G401 (cell line): ENCODE measurements at regions of chr9 and their contacts with region 1.

Region 1: DNA sequence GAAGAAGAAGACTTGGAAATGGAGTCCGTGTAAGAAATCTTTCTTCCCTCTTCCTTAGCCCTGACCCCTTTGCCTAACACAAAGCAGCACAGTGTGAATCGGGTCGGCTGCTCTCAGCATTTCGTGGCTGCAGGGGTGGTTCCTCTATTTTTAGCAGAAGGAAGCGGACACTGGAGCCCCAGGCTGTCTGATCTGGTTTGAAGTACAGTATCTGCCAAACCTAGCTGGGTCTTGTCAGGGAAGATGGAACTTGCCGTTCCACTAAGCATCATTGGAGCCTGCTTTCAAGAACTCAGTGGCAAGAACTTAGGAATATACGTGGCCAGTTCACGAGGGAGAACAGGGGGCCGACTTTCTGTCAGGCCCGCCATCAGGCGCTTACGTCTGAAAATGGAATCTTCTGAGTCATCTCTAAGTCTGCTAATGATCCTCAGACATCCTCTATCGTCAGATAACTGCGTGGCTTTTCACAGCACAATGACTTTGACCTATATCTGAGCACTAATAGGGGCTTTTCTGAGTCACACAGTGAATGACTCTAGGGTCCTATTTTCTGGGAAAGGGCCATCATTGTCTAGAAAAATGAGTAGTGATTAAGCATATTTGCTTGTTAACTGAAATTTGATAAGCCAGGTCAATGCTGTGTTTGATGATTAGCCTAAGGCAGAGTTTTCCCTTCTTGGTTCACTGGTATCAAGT is 43.3 kb upstream of the NCS1 start:
- DNase-seq: peak; percentile 86

Region 2: GRCh38 chr9:130023144-130023787 is 105.6 kb before region 1 on chr9:
- in situ Hi-C with region 1: no loop called
- DNase-seq: no peak

Region 3: GRCh38 chr9:130186839-130187522 is 58.1 kb after region 1 on chr9:
- in situ Hi-C with region 1: no loop called
- DNase-seq: peak; percentile 89

Region 4: DNA sequence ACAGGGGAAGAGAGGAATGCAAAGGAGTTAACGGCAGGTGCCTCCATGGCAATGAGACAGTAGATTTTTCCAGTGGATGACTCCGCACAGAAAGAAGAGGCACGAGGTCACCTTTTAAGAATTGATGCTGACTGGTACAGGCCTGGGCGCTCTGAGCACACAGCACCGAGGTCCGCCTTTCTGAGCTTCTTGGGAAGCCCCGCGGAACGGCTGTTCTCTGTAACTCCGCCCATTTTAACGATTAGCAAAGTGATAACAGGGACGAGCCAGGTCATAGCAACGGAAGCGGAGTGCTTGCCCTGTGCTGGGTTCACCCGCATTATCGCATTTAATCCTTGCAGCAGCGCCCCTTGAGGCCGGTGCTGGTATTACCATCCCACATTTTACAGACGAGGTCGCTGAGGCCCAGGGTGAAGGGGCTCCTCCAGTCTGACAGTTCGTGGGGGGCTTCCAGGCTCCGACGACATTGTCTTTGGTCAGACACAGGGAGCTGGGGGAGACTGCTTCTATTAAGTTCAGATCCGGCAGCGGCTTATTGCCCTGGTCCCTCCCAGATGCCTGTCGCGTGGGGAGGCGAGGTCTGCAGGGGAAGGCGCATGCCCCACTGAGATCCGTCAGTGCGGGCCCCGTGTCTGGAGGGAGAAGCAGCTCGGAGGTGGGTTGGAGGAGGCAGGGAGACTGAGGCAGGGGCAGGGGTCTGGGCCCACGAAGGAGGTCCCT is 114.3 kb after region 1 on chr9:
- in situ Hi-C with region 1: loop called (anchors 10 kb)
- DNase-seq: peak; percentile 79